ENCODE measurements at regions of chr17 and their contacts with region 1.

Region 1: GRCh38 chr17:75428543-75429469 is 23.3 kb upstream of the GRB2 start:
- DNase-seq: no peak

Region 2: DNA sequence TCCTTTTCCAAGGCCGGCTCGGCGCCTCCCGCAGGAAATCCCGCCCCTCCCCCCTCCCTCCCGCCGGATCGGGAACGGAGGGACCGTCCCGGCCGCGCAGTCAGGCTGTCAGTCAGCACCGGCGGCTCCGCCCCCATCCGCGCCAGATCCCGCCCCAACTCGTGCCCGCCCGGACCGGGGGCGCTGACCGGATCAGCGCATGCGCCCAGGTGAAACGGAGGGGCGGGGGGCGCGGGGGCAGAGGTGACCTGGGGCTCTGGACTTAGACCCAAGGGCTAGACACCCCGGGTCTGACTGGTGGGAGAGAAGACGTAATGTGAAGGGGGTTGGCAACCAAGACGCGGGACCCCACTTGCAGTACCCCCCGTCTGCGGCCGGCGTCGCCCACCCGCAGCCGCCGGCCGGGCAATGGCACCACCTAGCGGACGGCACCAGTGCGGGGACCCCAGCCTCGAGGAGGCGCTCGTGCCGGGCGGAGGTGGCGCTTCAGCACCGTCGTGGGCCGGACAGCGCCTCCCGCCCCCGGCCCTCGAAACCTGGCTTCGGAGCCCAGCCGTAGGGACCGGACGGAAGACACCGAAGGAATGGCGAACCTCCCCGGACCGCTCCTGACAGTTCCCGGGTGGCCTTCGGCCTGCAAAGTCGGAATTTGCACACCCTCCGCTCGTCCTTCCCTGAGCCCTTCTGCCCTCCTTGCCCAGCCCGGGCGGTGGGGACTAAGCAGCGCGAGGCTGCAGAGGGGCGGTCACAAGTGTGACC is 86.9 kb after region 1 on chr17 and contains the start of gene CASKIN2:
- intact Hi-C with region 1: loop called (anchors 5 kb)
- DNase-seq: peak; percentile 98
- total RNA-seq, gene CASKIN2: 51.1 to 57.6 TPM

Measured in posterior vena cava (tissue), 2 donors.